Activated B cell treated with CpG ODN at 0.5 μM for 24 hours (primary cell): ENCODE measurements at regions of chr6 and their contacts with region 1.

Region 1: GRCh38 chr6:16761471-16762267 is 409 bp upstream of the ATXN1 start:
- DNase-seq: peak; percentile 72
- ATAC-seq: peak; percentile 59
- H3K4me3 Mint-ChIP-seq: peak overlapping the region; percentile 95
- H3K27ac Mint-ChIP-seq: peak overlapping the region; percentile 92
- H3K4me1 Mint-ChIP-seq: peaks cover 38% of the 10 kb centered on the region
- H3K27me3 Mint-ChIP-seq: no peaks in the 10 kb centered on the region
- CTCF ChIP-seq: no peak

Region 2: GRCh38 chr6:15148356-15148946 is 1613.2 kb before region 1 on chr6:
- CTCF ChIA-PET with region 1: no interaction called
- POLR2A ChIA-PET with region 1: no interaction called
- intact Hi-C with region 1: no loop called
- DNase-seq: no peak
- ATAC-seq: peak; percentile 62
- H3K4me3 Mint-ChIP-seq: no peak overlapping the region
- H3K27ac Mint-ChIP-seq: peak overlapping the region; percentile 38
- H3K4me1 Mint-ChIP-seq: peaks cover 41% of the 10 kb centered on the region
- H3K27me3 Mint-ChIP-seq: no peaks in the 10 kb centered on the region
- CTCF ChIP-seq: no peak

Region 3: GRCh38 chr6:16043171-16044135 is 718.2 kb before region 1 on chr6:
- CTCF ChIA-PET with region 1: no interaction called
- POLR2A ChIA-PET with region 1: no interaction called
- intact Hi-C with region 1: no loop called
- DNase-seq: no peak
- ATAC-seq: no peak
- H3K4me3 Mint-ChIP-seq: no peak overlapping the region
- H3K27ac Mint-ChIP-seq: no peak overlapping the region
- H3K4me1 Mint-ChIP-seq: peaks cover 14% of the 10 kb centered on the region
- H3K27me3 Mint-ChIP-seq: no peaks in the 10 kb centered on the region
- CTCF ChIP-seq: no peak

Region 4: DNA sequence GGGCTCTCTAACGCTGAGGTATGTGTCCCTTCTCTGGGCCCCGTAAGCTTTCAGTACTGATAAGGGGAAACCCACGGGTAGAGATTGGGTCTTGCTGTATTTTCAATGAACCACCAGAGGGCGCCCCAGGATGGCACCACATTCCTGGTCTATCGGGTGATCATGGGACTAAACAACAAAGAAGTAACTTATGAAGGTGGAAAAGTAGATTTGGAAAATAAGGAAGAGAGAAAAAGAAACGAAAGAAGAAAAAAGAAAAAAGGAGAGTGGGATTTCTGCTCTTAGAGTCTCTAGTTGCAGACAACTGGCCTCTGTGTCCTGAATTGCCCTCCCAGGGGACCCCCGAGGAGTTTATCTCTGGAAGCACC is 429.5 kb before region 1 on chr6:
- CTCF ChIA-PET with region 1: interaction called, 69 read pairs
- POLR2A ChIA-PET with region 1: interaction called, 12 read pairs
- intact Hi-C with region 1: loop called (anchors 1 kb)
- DNase-seq: peak; percentile 62
- ATAC-seq: peak; percentile 96
- H3K4me3 Mint-ChIP-seq: no peak overlapping the region
- H3K27ac Mint-ChIP-seq: no peak overlapping the region
- H3K4me1 Mint-ChIP-seq: peaks cover 11% of the 10 kb centered on the region
- H3K27me3 Mint-ChIP-seq: no peaks in the 10 kb centered on the region
- CTCF ChIP-seq: peak; percentile 78

Region 5: DNA sequence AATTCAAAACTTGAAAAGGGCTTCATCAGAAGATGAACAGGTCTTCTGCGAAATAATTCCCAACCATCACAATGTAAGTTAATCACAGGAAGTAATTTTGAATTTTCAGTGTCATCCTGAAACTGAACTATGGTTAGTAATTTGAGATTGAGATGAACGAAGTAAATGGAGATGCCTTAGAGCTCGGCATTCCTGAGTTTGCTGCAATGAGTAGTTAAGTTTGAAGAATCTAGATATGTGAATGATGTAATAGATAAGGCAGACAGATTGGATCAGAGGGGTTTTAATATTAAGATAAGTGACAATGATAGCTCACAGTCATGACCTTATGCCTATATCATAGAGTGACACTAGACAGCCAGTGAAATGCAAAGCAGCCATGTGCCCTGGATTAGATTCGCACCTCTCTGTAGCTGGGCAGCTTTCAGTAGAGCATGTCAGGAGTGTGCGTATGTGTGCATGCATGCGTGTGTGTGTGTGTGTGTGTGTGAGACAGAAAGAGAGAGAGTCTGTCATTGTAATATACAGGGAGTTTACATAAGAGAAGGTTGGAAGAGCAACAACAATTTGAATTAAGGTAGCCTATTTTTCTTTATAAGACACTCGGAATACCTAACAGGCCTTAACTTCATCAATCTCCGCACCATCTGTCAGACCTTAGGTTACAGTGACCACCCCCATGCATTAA is 290.3 kb before region 1 on chr6:
- CTCF ChIA-PET with region 1: interaction called, 6 read pairs
- POLR2A ChIA-PET with region 1: interaction called, 28 read pairs
- intact Hi-C with region 1: loop called (anchors 1 kb)
- DNase-seq: peak; percentile 22
- ATAC-seq: peak; percentile 81
- H3K4me3 Mint-ChIP-seq: peak overlapping the region; percentile 28
- H3K27ac Mint-ChIP-seq: peak overlapping the region; percentile 88
- H3K4me1 Mint-ChIP-seq: peaks cover 69% of the 10 kb centered on the region
- H3K27me3 Mint-ChIP-seq: no peaks in the 10 kb centered on the region
- CTCF ChIP-seq: no peak

Region 6: DNA sequence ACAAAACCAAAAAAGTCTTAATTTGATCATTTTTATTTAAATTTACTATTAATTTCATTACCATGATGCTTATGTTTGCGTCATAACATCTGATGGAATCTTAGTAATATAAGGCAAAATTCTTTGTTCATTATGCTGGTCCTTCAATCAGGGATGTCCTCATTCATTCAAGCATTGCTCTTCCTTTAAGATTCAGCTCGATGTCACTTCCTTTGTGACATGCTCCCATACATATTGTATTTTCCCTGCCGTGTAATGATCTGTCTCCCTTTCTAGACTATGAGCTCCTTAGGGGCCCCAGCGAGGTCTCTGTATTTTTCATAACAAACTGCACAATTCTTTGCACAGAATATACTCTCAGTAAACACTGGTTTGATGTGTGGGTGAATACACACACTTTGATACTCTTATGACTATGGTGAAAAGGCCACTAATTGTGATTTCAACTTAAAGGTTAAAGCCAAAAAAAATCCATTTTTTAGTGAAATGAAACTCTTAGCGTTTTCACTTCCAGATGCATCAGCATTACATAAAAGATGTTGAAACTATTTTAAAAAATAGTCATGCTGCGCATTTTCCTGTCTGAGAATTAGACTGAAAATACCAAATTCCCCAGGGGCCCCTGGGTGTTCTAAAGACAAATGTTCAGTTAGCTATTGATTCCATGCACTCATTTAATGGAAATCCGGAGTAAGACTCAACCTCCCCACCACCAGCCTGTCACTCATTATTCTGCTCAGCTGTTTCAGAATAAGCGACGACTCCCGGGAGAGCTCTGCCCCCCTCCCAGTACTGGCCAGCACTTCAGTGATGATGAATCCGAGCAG is 170.1 kb before region 1 on chr6:
- CTCF ChIA-PET with region 1: interaction called, 8 read pairs
- POLR2A ChIA-PET with region 1: interaction called, 18 read pairs
- intact Hi-C with region 1: loop called (anchors 1 kb)
- DNase-seq: no peak
- ATAC-seq: peak; percentile 75
- H3K4me3 Mint-ChIP-seq: peak overlapping the region; percentile 72
- H3K27ac Mint-ChIP-seq: peak overlapping the region; percentile 83
- H3K4me1 Mint-ChIP-seq: peaks cover 52% of the 10 kb centered on the region
- H3K27me3 Mint-ChIP-seq: no peaks in the 10 kb centered on the region
- CTCF ChIP-seq: no peak

Region 7: DNA sequence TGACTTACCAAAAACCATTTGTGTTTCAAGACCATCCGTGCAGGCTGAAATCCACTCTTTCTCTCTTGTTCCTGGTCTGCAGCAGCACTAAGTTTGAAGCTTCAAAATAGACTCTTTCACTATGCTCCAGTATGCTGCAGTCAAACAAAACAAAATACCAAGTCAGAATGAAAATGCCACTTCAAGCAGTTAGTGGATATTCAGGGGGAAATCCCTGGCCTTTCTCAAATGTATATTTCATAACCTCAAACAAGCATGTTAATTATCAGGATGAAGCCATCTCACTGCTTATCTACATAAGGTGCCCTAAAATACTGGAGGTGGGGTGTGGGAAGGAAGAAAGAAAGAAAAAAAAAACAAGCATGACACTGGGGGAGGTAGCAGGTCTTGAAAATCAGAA is 103.9 kb before region 1 on chr6:
- CTCF ChIA-PET with region 1: no interaction called
- POLR2A ChIA-PET with region 1: interaction called, 14 read pairs
- intact Hi-C with region 1: loop called (anchors 1 kb)
- DNase-seq: no peak
- ATAC-seq: peak; percentile 57
- H3K4me3 Mint-ChIP-seq: peak overlapping the region; percentile 45
- H3K27ac Mint-ChIP-seq: no peak overlapping the region
- H3K4me1 Mint-ChIP-seq: peaks cover 36% of the 10 kb centered on the region
- H3K27me3 Mint-ChIP-seq: no peaks in the 10 kb centered on the region
- CTCF ChIP-seq: no peak

Region 8: DNA sequence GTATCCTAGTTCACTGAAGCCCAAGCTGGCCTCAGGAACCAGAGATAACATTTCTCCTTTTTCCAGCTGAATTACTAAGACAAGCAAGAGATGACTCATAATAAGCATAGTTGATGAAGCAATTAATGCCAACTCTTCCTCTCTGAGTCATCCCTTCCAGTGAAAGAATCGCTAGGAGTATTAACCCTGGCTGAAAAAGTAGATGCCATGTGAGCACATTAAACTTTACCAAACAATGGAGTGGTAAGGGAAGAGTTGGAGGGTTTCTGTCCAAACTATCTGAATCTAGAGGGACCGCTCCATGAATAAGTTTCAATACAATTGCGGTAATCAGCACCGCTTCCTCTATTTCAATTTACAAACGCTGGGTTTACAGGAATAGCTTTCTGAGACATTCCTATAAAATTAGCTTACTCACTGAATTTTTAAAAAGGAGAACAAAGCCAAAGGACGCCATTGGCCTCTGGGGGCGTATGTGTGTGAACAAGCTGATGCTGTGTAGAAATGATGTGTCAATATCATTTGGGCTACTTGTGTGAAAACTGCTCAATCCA is 48.7 kb before region 1 on chr6:
- CTCF ChIA-PET with region 1: interaction called, 14 read pairs
- POLR2A ChIA-PET with region 1: interaction called, 12 read pairs
- intact Hi-C with region 1: loop called (anchors 1 kb)
- DNase-seq: no peak
- ATAC-seq: peak; percentile 54
- H3K4me3 Mint-ChIP-seq: peak overlapping the region; percentile 75
- H3K27ac Mint-ChIP-seq: peak overlapping the region; percentile 94
- H3K4me1 Mint-ChIP-seq: peaks cover 28% of the 10 kb centered on the region
- H3K27me3 Mint-ChIP-seq: no peaks in the 10 kb centered on the region
- CTCF ChIP-seq: no peak

Region 9: GRCh38 chr6:18387061-18387721 is 1625.5 kb after region 1 on chr6 and contains the start of gene RNF144B:
- CTCF ChIA-PET with region 1: no interaction called
- POLR2A ChIA-PET with region 1: no interaction called
- intact Hi-C with region 1: no loop called
- DNase-seq: peak; percentile 64
- ATAC-seq: peak; percentile 94
- H3K4me3 Mint-ChIP-seq: peak within 1 kb of the TSS; percentile 95
- H3K27ac Mint-ChIP-seq: peak within 1 kb of the TSS; percentile 80
- H3K4me1 Mint-ChIP-seq: peaks cover 48% of the 10 kb centered on the region
- H3K27me3 Mint-ChIP-seq: no peaks in the 10 kb centered on the region
- CTCF ChIP-seq: no peak
- total RNA-seq, gene RNF144B: 12.6 and 13.5 TPM in 2 replicates